MCF 10A (cell line): ENCODE measurements at regions of chr10 and their contacts with region 1.

Region 1: GRCh38 chr10:126387023-126387921 is 1.0 kb downstream of the ADAM12 start:
- DNase-seq: peak; percentile 78
- H3K4me3 Mint-ChIP-seq: peak overlapping the region; percentile 86
- H3K27ac Mint-ChIP-seq: peak overlapping the region; percentile 18
- H3K4me1 Mint-ChIP-seq: peaks cover 9% of the 10 kb centered on the region
- H3K27me3 Mint-ChIP-seq: peaks cover 11% of the 10 kb centered on the region
- CTCF ChIP-seq: peak; percentile 74

Region 2: DNA sequence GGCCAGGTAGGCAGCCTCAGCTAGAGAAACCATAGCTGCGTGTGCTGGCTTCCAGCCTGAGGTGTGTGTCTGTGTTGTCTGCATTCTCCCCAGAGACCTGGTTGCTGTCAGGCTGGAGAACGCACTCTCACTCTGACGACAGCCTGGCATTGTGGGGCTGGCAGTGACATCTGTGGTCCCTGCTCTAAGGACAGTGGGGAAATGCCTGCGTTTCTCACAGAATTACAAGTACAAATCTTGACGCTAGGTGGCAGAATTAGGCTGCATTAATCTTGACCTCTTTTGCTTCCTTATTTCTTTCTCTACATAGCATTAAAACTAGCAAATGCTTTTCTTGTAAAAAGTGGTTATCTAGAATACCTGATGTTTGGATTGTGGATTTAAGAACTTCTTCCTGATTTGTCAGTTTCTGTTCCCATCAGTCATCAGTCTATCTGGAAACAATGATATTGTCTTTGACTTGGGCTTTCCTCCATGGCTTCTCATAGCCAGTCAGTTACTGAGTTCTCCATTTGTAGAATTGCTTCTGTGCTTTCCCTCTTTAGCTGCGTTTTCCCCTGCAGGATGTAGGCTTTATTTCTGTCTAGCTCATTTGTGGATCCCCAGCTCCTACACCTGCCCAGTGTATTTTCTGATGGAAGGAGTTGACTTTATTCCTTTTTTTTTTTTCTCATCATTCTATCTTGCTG is 404.9 kb before region 1 on chr10:
- CTCF ChIA-PET with region 1: interaction called, 6 read pairs
- POLR2A ChIA-PET with region 1: no interaction called
- intact Hi-C with region 1: loop called (anchors 1 kb)
- DNase-seq: peak; percentile 73
- H3K4me3 Mint-ChIP-seq: no peak overlapping the region
- H3K27ac Mint-ChIP-seq: no peak overlapping the region
- H3K4me1 Mint-ChIP-seq: no peaks in the 10 kb centered on the region
- H3K27me3 Mint-ChIP-seq: no peaks in the 10 kb centered on the region
- CTCF ChIP-seq: peak; percentile 53

Region 3: GRCh38 chr10:126252884-126253618 is 134.2 kb before region 1 on chr10:
- CTCF ChIA-PET with region 1: no interaction called
- POLR2A ChIA-PET with region 1: no interaction called
- intact Hi-C with region 1: loop called (anchors 10 kb)
- DNase-seq: peak; percentile 75
- H3K4me3 Mint-ChIP-seq: no peak overlapping the region
- H3K27ac Mint-ChIP-seq: no peak overlapping the region
- H3K4me1 Mint-ChIP-seq: peaks cover 19% of the 10 kb centered on the region
- H3K27me3 Mint-ChIP-seq: no peaks in the 10 kb centered on the region
- CTCF ChIP-seq: no peak

Region 4: DNA sequence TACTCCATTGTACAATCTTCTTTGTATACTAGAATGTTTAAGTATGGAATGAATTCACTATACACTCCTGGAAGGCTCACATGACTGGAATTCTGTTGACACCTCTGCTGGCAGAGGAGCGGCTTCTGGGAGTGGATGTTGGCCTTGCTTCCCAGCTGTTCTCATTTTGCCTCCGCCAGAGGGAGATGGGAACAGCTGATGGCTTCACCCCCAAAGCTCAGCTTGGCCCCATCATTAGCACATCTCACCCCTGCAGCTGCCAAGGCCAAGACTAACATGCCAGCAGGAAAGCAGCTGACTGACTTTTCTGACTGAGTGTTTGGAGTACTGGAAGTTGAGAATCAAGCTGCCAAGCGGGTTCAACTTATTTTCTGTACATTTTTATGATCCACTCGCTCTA is 14.1 kb before region 1 on chr10:
- CTCF ChIA-PET with region 1: no interaction called
- POLR2A ChIA-PET with region 1: no interaction called
- intact Hi-C with region 1: no loop called
- DNase-seq: no peak
- H3K4me3 Mint-ChIP-seq: no peak overlapping the region
- H3K27ac Mint-ChIP-seq: no peak overlapping the region
- H3K4me1 Mint-ChIP-seq: peaks cover 11% of the 10 kb centered on the region
- H3K27me3 Mint-ChIP-seq: no peaks in the 10 kb centered on the region
- CTCF ChIP-seq: no peak

Region 5: GRCh38 chr10:126504063-126504739 is 116.9 kb after region 1 on chr10:
- CTCF ChIA-PET with region 1: interaction called, 7 read pairs
- POLR2A ChIA-PET with region 1: no interaction called
- intact Hi-C with region 1: loop called (anchors 1 kb)
- DNase-seq: peak; percentile 82
- H3K4me3 Mint-ChIP-seq: no peak overlapping the region
- H3K27ac Mint-ChIP-seq: no peak overlapping the region
- H3K4me1 Mint-ChIP-seq: no peaks in the 10 kb centered on the region
- H3K27me3 Mint-ChIP-seq: no peaks in the 10 kb centered on the region
- CTCF ChIP-seq: peak; percentile 75